ENCODE measurements at regions of chr2 and their contacts with region 1.

Region 1: GRCh38 chr2:120312861-120313694 is 32.9 kb upstream of the INHBB start:
- DNase-seq: peak; percentile 78
- CTCF ChIP-seq: peak; percentile 93

Region 2: GRCh38 chr2:120109186-120110061 is 203.7 kb before region 1 on chr2:
- CTCF ChIA-PET with region 1: interaction called, 26 read pairs
- POLR2A ChIA-PET with region 1: no interaction called
- DNase-seq: peak; percentile 28
- CTCF ChIP-seq: peak; percentile 59

Region 3: DNA sequence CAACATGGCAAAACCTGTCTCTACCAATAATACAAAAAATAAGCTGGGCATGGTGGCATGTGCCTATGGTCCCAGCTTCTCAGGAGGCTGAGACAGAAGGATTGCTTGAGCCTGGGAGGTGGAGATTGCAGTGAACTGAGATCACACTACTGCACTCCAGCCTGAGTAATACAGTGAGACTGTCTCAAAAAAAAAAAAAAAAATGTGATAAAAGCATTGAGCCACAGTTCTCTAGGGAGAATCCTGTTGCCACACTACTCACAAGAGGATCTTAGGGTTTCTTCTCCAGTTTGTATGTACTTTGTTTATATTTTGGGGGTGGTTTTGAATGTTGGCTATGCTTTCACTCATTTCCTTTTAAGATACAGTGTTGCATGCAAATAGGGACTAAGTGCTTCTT is 151.9 kb before region 1 on chr2:
- CTCF ChIA-PET with region 1: no interaction called
- POLR2A ChIA-PET with region 1: no interaction called
- DNase-seq: no peak
- CTCF ChIP-seq: no peak

Region 4: DNA sequence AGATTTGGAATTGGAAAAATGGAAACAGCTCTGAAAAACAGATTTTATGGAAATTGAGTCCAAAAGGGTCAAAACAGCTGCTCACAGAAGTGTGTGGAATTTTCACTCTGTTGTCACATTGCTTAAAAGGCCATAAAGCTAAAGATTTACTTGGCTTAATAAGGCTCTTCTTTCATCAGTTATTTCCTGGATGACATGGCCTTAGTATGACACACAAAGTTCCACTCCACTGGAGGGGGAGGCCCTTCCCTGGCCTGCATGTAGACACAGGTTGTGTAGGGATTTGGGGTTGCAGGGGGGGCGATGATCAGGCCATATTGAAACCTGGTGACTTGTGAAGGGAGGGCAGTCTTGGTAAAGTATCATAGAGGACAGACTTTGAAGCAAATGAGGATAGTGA is 123.9 kb before region 1 on chr2:
- CTCF ChIA-PET with region 1: no interaction called
- POLR2A ChIA-PET with region 1: no interaction called
- DNase-seq: no peak
- CTCF ChIP-seq: no peak

Region 5: DNA sequence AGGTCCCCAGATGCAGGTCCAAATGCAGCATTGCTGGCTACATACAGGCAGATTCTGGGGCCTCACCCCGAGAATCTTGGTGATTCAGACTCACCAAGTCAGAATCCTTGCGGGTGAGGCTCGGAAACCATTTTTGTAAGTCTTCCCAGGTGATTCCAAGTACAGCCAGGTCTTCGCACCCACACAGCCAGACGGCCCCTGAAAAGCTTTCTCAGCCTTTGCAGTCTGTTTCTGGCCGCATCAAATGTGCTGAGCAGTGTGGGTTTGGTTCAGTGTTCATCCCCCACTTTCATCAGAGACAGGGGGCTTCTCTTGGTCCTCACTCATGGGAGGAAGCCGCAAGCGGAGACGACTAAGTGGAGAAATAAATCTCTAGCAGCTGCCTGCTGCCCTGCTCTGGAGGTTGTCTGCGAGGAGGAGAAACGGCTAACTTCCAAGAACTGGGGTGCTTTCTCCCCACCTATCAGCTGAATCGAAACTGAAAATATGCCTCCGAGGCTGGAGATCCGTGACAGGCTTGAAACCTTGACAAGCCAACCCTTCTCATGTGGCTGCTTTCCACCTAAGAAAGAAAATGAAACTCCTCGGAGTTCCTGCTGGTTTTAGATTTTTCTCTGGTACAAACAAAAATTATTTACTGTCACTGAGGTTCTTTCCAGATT is 81.0 kb before region 1 on chr2:
- CTCF ChIA-PET with region 1: interaction called, 10 read pairs
- POLR2A ChIA-PET with region 1: no interaction called
- DNase-seq: peak; percentile 83
- CTCF ChIP-seq: no peak

Region 6: GRCh38 chr2:120287183-120288015 is 25.7 kb before region 1 on chr2:
- CTCF ChIA-PET with region 1: interaction called, 47 read pairs
- POLR2A ChIA-PET with region 1: no interaction called
- DNase-seq: peak; percentile 75
- CTCF ChIP-seq: no peak

Region 7: DNA sequence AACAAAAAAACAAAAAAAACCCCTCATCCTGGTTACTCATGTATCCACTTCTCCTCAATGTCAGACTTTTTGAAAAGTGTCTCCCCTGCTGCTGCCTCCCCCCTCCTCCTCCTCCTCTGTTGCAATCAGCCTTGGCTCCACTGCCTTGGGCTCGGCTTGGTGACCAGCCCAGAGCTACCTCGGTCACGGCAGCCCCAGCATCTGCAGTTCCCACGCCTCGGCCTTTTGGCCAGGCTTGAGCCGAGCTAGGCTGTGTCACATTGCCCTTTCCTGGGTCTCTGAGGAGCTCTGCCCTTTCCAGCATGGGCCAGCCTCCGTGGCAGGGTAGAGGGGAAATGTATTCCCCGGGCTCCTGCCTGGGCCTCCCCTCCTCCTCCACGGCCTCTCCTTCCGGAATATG is 10.1 kb after region 1 on chr2:
- CTCF ChIA-PET with region 1: interaction called, 14 read pairs
- POLR2A ChIA-PET with region 1: no interaction called
- DNase-seq: no peak
- CTCF ChIP-seq: no peak